Activated CD8-positive, alpha-beta T cell treated with anti-CD3 and anti-CD28 coated beads for 36 hours (primary cell): ENCODE measurements at regions of chr9 and their contacts with region 1.

Region 1: GRCh38 chr9:34989003-34989945 is at the start of gene DNAJB5:
- DNase-seq: peak; percentile 98
- ATAC-seq: peak; percentile 85
- H3K4me3 Mint-ChIP-seq: peak within 1 kb of the TSS; percentile 80
- H3K27ac Mint-ChIP-seq: peak within 1 kb of the TSS; percentile 91
- H3K4me1 Mint-ChIP-seq: peaks cover 72% of the 10 kb centered on the region
- H3K27me3 Mint-ChIP-seq: no peaks in the 10 kb centered on the region
- CTCF ChIP-seq: no peak
- total RNA-seq, gene DNAJB5: 14.6 to 16.4 TPM

Region 2: DNA sequence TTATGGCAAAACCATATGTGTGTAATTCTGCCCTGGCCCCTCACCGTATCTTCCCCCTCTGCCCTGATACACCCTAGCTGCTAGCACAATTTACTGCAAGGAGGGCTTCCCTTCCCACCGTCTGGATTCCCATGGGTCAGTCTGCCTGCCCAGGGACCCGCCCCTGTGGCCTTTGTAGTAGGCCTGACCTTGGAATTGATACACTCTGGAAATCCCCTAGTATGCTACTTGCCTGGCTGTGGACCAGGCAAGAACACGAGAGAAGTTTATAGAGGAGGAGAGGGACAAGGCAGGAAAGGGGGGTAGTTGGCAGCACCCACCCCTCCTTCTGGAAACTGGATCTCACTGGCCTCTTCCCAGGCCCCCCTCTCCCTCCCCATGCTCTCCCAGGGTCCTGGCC is 163.5 kb before region 1 on chr9:
- CTCF ChIA-PET with region 1: no interaction called
- POLR2A ChIA-PET with region 1: no interaction called
- intact Hi-C with region 1: no loop called
- DNase-seq: no peak
- ATAC-seq: no peak
- H3K4me3 Mint-ChIP-seq: no peak overlapping the region
- H3K27ac Mint-ChIP-seq: no peak overlapping the region
- H3K4me1 Mint-ChIP-seq: no peaks in the 10 kb centered on the region
- H3K27me3 Mint-ChIP-seq: peaks cover 18% of the 10 kb centered on the region
- CTCF ChIP-seq: no peak

Region 3: DNA sequence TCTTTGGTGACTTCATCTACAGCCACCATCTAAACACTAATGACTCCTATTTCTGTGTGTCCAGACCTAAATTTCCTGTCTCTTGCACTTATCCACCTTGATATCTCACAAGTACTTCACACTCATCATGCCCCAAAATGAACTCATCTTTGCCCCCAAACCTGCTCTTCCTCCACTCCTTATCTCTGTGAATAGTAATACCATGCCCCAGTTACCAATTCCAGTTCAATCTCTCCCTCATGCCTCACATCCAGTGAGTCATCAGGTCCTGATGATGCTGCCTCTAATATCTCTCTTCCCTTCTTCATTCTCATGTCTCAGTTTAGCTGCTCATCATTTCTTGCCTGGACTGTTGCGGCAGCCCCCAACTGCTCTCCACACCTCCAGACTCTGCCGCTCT is 14.6 kb before region 1 on chr9:
- CTCF ChIA-PET with region 1: interaction called, 20 read pairs
- POLR2A ChIA-PET with region 1: interaction called, 3 read pairs
- intact Hi-C with region 1: no loop called
- DNase-seq: no peak
- ATAC-seq: no peak
- H3K4me3 Mint-ChIP-seq: no peak overlapping the region
- H3K27ac Mint-ChIP-seq: no peak overlapping the region
- H3K4me1 Mint-ChIP-seq: no peaks in the 10 kb centered on the region
- H3K27me3 Mint-ChIP-seq: peaks cover 2% of the 10 kb centered on the region
- CTCF ChIP-seq: no peak

Region 4: DNA sequence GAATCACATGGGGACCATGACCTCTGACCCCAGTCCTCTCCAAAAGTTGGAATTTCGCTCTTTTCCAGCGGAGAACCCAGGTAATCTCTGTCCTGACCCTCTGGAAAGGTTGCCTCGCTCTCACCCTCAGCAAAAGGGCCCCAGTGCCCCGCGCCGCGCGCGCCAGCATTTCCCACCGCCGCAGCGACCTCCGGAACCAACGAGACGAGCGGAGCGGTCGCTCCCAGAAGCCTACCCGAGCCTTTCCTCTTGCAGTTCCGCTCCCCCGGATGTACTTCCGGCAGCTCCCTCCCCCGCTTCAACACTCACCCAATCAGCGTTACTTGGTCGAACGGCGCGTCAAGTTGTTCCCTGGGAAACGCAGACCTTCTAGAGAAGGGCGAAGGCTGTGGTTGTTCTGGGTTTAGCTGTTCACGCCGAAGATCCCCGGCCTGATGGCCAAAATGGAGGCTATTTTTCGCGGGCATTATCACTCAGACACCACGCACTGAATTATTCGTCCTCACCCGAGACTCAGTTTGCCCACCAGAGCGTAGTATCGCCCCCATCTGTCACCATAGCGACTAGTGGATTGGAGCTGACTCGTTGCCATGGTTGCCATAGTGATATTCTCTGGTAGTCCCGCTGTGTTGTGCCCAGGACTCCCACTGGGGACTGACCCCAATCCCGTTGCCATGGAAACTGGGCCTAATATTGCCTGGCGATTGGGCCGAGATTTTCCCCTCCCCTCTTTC is 113.8 kb after region 1 on chr9 and contains the start of gene STOML2:
- CTCF ChIA-PET with region 1: no interaction called
- POLR2A ChIA-PET with region 1: no interaction called
- intact Hi-C with region 1: no loop called
- DNase-seq: peak; percentile 96
- ATAC-seq: peak; percentile 98
- H3K4me3 Mint-ChIP-seq: peak within 1 kb of the TSS; percentile 98
- H3K27ac Mint-ChIP-seq: peak within 1 kb of the TSS; percentile 97
- H3K4me1 Mint-ChIP-seq: peaks cover 22% of the 10 kb centered on the region
- H3K27me3 Mint-ChIP-seq: no peaks in the 10 kb centered on the region
- CTCF ChIP-seq: no peak
- total RNA-seq, gene STOML2: 208 to 211 TPM

Region 5: GRCh38 chr9:35135988-35136387 is 146.7 kb after region 1 on chr9:
- CTCF ChIA-PET with region 1: no interaction called
- POLR2A ChIA-PET with region 1: no interaction called
- intact Hi-C with region 1: no loop called
- DNase-seq: no peak
- ATAC-seq: no peak
- H3K4me3 Mint-ChIP-seq: no peak overlapping the region
- H3K27ac Mint-ChIP-seq: no peak overlapping the region
- H3K4me1 Mint-ChIP-seq: no peaks in the 10 kb centered on the region
- H3K27me3 Mint-ChIP-seq: no peaks in the 10 kb centered on the region
- CTCF ChIP-seq: no peak

Region 6: GRCh38 chr9:35172878-35173277 is 183.6 kb after region 1 on chr9:
- CTCF ChIA-PET with region 1: no interaction called
- POLR2A ChIA-PET with region 1: no interaction called
- intact Hi-C with region 1: no loop called
- DNase-seq: no peak
- ATAC-seq: no peak
- H3K4me3 Mint-ChIP-seq: no peak overlapping the region
- H3K27ac Mint-ChIP-seq: no peak overlapping the region
- H3K4me1 Mint-ChIP-seq: no peaks in the 10 kb centered on the region
- H3K27me3 Mint-ChIP-seq: peaks cover 6% of the 10 kb centered on the region
- CTCF ChIP-seq: no peak